Heart right ventricle (tissue), 16 donors: ENCODE measurements at regions of chr4 and their contacts with region 1.

Region 1: GRCh38 chr4:139108567-139109128 is 68.4 kb downstream of the ELF2 start:
- DNase-seq: no peak
- ATAC-seq: no peak
- H3K4me3 ChIP-seq: no peak overlapping the region
- H3K27ac ChIP-seq: no peak overlapping the region
- H3K4me1 ChIP-seq: no peaks in the 10 kb centered on the region
- H3K27me3 ChIP-seq: no peaks in the 10 kb centered on the region
- CTCF ChIP-seq: no peak

Region 2: GRCh38 chr4:139167774-139168444 is 59.3 kb after region 1 on chr4:
- intact Hi-C with region 1: loop called in 6 of 10 experiments (anchors 5 to 10 kb)
- DNase-seq: no peak
- ATAC-seq: peak in 6 of 8 donors; percentile 18 to 81 (median 60)
- H3K4me3 ChIP-seq: no peak overlapping the region
- H3K27ac ChIP-seq: peak overlapping the region in 2 of 10 donors; percentile 30 to 54
- H3K4me1 ChIP-seq: peaks cover 10 to 77% (median 55%) of the 10 kb centered on the region in 9 donors
- H3K27me3 ChIP-seq: no peaks in the 10 kb centered on the region
- CTCF ChIP-seq: peak in 7 of 9 donors; percentile 34 to 58 (median 46)

Region 3: GRCh38 chr4:139229534-139230039 is 120.9 kb after region 1 on chr4:
- intact Hi-C with region 1: no loop called
- DNase-seq: peak in 1 of 2 donors; percentile 12
- ATAC-seq: peak in 5 of 8 donors; percentile 52 to 71 (median 62)
- H3K4me3 ChIP-seq: no peak overlapping the region
- H3K27ac ChIP-seq: no peak overlapping the region
- H3K4me1 ChIP-seq: no peaks in the 10 kb centered on the region
- H3K27me3 ChIP-seq: no peaks in the 10 kb centered on the region
- CTCF ChIP-seq: peak; percentile 39 to 80 (median 72)

Region 4: DNA sequence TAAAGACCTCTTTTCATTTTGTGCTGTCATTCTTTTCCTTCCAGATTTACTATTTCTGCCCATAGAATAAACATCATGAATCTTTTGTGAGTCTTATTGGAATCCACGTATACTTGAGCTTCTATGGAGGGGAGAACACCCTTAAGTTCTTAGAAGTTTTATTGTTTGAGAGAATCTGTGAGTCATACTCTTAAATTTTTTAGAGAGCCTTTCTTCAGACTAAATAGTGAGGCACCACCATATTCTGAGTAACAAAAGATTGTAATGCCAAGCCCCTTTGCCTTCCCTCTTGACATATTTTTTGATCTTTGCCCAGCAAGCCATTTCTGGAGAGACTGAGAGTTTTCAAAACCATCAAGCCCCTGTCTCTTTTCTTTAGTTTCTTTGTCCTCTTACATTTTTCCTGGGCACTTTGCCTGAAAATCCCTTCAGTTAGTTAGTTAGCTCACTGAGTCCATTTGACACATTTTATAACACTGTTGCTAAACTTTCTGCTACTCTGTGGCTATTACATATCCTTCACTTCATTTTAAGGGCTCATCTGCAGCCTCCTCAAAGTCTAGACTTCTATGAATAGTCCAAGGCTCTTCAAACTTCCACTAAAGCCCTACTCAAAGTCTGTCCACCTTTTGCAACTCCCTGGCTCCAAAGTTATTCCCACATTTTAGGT is 258.9 kb after region 1 on chr4:
- intact Hi-C with region 1: no loop called
- DNase-seq: no peak
- ATAC-seq: no peak
- H3K4me3 ChIP-seq: no peak overlapping the region
- H3K27ac ChIP-seq: peak overlapping the region in 1 of 10 donors; percentile 2
- H3K4me1 ChIP-seq: peaks cover 0 to 8% (median 0%) of the 10 kb centered on the region in 9 donors
- H3K27me3 ChIP-seq: no peaks in the 10 kb centered on the region
- CTCF ChIP-seq: no peak